ENCODE measurements at regions of chr1 and their contacts with region 1.

Region 1: DNA sequence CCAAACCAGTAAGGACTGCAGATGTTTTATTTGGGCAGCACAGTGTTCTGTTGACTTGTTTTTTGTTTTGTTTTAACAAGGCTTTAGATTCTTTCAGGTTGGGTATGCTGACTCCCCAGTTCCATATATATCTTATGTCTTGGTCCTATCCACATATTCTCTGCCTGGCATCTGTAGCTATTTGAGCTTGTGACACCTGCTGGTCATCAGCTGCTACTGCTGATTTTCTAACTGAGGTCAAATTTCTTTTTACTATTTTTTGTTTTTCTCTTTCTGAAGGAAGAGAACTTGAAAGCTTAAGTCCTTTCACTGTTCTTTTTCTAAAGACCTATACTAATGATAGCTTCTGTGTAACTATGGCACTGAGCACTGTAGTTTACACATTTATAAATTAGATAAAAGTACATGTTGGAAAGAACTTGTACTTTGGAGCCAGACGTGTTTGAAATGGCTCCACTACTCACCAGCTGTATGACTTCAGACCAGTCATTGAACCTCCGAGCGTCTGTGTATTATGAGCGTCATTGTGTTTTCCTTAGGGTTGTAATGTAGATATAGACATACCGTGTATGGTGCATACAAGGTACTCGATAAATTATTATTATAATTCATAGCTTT is 109.4 kb downstream of the NRDC start:
- DNase-seq: no peak
- ATAC-seq: peak; percentile 86
- H3K4me3 ChIP-seq: no peak overlapping the region
- H3K27ac ChIP-seq: no peak overlapping the region
- H3K4me1 ChIP-seq: peaks cover 3% of the 10 kb centered on the region; the same call in 1 of the 2 replicates
- H3K27me3 ChIP-seq: no peaks in the 10 kb centered on the region
- CTCF ChIP-seq: peak; percentile 58 to 74 (median 69)
- EP300 ChIP-seq: no peak
- POLR2A ChIP-seq: no peak
- RAD21 ChIP-seq: peak; percentile 74

Region 2: GRCh38 chr1:51270751-51271150 is 498.3 kb before region 1 on chr1:
- CTCF ChIA-PET with region 1: no interaction called
- POLR2A ChIA-PET with region 1: no interaction called
- RAD21 ChIA-PET with region 1: no interaction called
- SMC1A ChIA-PET with region 1: no interaction called
- in situ Hi-C with region 1: no loop called
- intact Hi-C with region 1: no loop called
- DNase-seq: no peak
- ATAC-seq: no peak
- H3K4me3 ChIP-seq: no peak overlapping the region
- H3K27ac ChIP-seq: no peak overlapping the region
- H3K4me1 ChIP-seq: peaks cover 17% of the 10 kb centered on the region
- H3K27me3 ChIP-seq: no peaks in the 10 kb centered on the region
- CTCF ChIP-seq: no peak
- EP300 ChIP-seq: no peak
- POLR2A ChIP-seq: no peak
- RAD21 ChIP-seq: no peak

Region 3: GRCh38 chr1:51569284-51570062 is 199.6 kb before region 1 on chr1:
- CTCF ChIA-PET with region 1: interaction called, 45 read pairs
- POLR2A ChIA-PET with region 1: no interaction called
- RAD21 ChIA-PET with region 1: interaction called, 16 read pairs
- SMC1A ChIA-PET with region 1: interaction called, 13 read pairs
- in situ Hi-C with region 1: no loop called
- intact Hi-C with region 1: no loop called
- DNase-seq: peak; percentile 84
- ATAC-seq: peak; percentile 88
- H3K4me3 ChIP-seq: peak overlapping the region; percentile 17; the same call in 1 of the 2 replicates
- H3K27ac ChIP-seq: peak overlapping the region; percentile 74
- H3K4me1 ChIP-seq: peaks cover 34% of the 10 kb centered on the region
- H3K27me3 ChIP-seq: no peaks in the 10 kb centered on the region
- CTCF ChIP-seq: peak in 2 of 3 experiments; percentile 23 to 26; a peak in 3 of 6 replicates
- EP300 ChIP-seq: no peak
- POLR2A ChIP-seq: peak; percentile 36; the same call in 1 of the 2 replicates
- RAD21 ChIP-seq: peak; percentile 40

Region 4: GRCh38 chr1:51627678-51628077 is 141.4 kb before region 1 on chr1:
- CTCF ChIA-PET with region 1: interaction called, 75 read pairs
- POLR2A ChIA-PET with region 1: no interaction called
- RAD21 ChIA-PET with region 1: interaction called, 34 read pairs
- SMC1A ChIA-PET with region 1: interaction called, 95 read pairs
- in situ Hi-C with region 1: loop called (anchors 5 kb)
- intact Hi-C with region 1: loop called (anchors 2 kb)
- DNase-seq: no peak
- ATAC-seq: peak; percentile 72
- H3K4me3 ChIP-seq: no peak overlapping the region
- H3K27ac ChIP-seq: no peak overlapping the region
- H3K4me1 ChIP-seq: no peaks in the 10 kb centered on the region
- H3K27me3 ChIP-seq: no peaks in the 10 kb centered on the region
- CTCF ChIP-seq: peak; percentile 35 to 55 (median 37); a peak in 4 of 6 replicates
- EP300 ChIP-seq: no peak
- POLR2A ChIP-seq: no peak
- RAD21 ChIP-seq: peak; percentile 80

Region 5: GRCh38 chr1:51666478-51666877 is 102.6 kb before region 1 on chr1:
- CTCF ChIA-PET with region 1: interaction called, 6 read pairs
- POLR2A ChIA-PET with region 1: no interaction called
- RAD21 ChIA-PET with region 1: no interaction called
- SMC1A ChIA-PET with region 1: interaction called, 12 read pairs
- in situ Hi-C with region 1: no loop called
- intact Hi-C with region 1: no loop called
- DNase-seq: no peak
- ATAC-seq: no peak
- H3K4me3 ChIP-seq: no peak overlapping the region
- H3K27ac ChIP-seq: no peak overlapping the region
- H3K4me1 ChIP-seq: no peaks in the 10 kb centered on the region
- H3K27me3 ChIP-seq: no peaks in the 10 kb centered on the region
- CTCF ChIP-seq: no peak
- EP300 ChIP-seq: no peak
- POLR2A ChIP-seq: no peak
- RAD21 ChIP-seq: no peak

Region 6: GRCh38 chr1:51719146-51719545 is 49.9 kb before region 1 on chr1:
- CTCF ChIA-PET with region 1: interaction called, 34 read pairs
- POLR2A ChIA-PET with region 1: no interaction called
- RAD21 ChIA-PET with region 1: interaction called, 16 read pairs
- SMC1A ChIA-PET with region 1: interaction called, 14 read pairs
- in situ Hi-C with region 1: no loop called
- intact Hi-C with region 1: no loop called
- DNase-seq: no peak
- ATAC-seq: peak; percentile 38; the same call in 1 of the 3 replicates
- H3K4me3 ChIP-seq: no peak overlapping the region
- H3K27ac ChIP-seq: no peak overlapping the region
- H3K4me1 ChIP-seq: peaks cover 9% of the 10 kb centered on the region; the same call in 1 of the 2 replicates
- H3K27me3 ChIP-seq: no peaks in the 10 kb centered on the region
- CTCF ChIP-seq: peak in 1 of 3 experiments; percentile 17; a peak in 1 of 6 replicates
- EP300 ChIP-seq: no peak
- POLR2A ChIP-seq: no peak
- RAD21 ChIP-seq: peak; percentile 35; the same call in 1 of the 2 replicates

Region 7: GRCh38 chr1:51750218-51750617 is 18.9 kb before region 1 on chr1:
- CTCF ChIA-PET with region 1: interaction called, 17 read pairs
- POLR2A ChIA-PET with region 1: no interaction called
- RAD21 ChIA-PET with region 1: no interaction called
- SMC1A ChIA-PET with region 1: interaction called, 12 read pairs
- in situ Hi-C with region 1: no loop called
- intact Hi-C with region 1: no loop called
- DNase-seq: no peak
- ATAC-seq: no peak
- H3K4me3 ChIP-seq: no peak overlapping the region
- H3K27ac ChIP-seq: no peak overlapping the region
- H3K4me1 ChIP-seq: no peaks in the 10 kb centered on the region; the same call in 1 of the 2 replicates
- H3K27me3 ChIP-seq: no peaks in the 10 kb centered on the region
- CTCF ChIP-seq: no peak
- EP300 ChIP-seq: no peak
- POLR2A ChIP-seq: no peak
- RAD21 ChIP-seq: no peak

Region 8: DNA sequence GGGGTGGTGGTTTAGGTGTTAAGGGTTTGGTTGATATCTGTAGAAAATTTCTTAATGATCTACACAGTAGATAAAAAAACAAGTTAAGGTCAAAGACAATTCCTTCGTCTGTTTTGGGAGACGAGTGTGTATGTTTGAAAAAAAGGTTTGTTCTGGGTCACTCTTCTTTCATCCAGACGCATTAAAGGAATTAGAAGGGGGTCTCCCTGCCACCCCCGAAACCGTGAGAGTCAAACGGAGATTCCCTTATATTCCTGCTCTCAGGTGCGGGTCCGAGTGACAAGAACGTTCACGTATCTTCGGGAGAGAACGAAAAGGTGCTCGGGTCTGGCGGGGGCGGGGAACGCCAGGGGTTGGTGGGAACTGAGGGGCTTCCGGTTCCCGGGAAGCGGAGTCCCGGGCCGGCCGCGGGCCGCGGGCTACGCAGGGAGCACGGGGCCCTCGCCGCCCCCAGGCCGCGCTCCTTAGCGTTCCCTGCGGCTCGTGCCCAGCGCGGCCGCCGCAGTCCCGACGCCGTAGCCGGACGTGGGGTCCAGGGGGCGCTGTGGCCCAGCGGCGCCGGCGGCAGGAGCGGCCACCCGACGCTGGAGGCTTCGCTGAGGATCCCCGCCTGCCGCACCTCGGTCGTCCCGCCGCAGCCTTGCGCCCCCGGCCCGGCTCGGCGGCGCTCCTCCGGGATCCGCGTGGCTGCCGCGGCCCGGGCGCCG is 372.6 kb after region 1 on chr1 and contains the start of gene ZFYVE9:
- CTCF ChIA-PET with region 1: no interaction called
- POLR2A ChIA-PET with region 1: no interaction called
- RAD21 ChIA-PET with region 1: no interaction called
- SMC1A ChIA-PET with region 1: no interaction called
- in situ Hi-C with region 1: no loop called
- intact Hi-C with region 1: no loop called
- DNase-seq: no peak
- ATAC-seq: peak; percentile 89
- H3K4me3 ChIP-seq: peak within 1 kb of the TSS; percentile 79
- H3K27ac ChIP-seq: peak within 1 kb of the TSS; percentile 21
- H3K4me1 ChIP-seq: peaks cover 11% of the 10 kb centered on the region; the same call in 1 of the 2 replicates
- H3K27me3 ChIP-seq: no peaks in the 10 kb centered on the region; a peak in 1 of 4 replicates
- CTCF ChIP-seq: peak; percentile 62 to 84 (median 64); a peak in 5 of 6 replicates
- EP300 ChIP-seq: no peak
- POLR2A ChIP-seq: no peak; the same call in 1 of the 2 replicates
- RAD21 ChIP-seq: peak; percentile 60
- polyA plus RNA-seq, gene ZFYVE9: 0.26 to 0.47 TPM